IMR-90 (cell line): ENCODE measurements at regions of chr6 and their contacts with region 1.

Region 1: DNA sequence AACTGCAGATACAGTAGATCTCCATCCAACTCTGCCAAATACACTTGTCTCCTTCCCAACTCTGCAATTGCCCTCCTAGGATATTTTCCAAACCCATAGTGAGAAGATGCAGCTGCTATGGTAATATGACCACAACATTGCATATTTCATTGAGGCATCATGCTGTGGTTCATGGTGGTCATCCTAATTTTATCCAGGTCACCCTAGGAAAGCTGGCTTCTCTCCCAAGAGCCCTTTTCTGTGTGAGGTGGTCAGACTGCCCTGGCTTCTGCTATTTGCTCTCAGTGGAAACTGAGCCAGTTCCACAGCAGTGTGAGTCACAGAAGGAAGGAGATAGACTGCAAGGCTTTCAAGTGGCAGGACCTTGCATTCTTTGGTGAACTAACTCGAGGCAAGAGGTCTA is 5.5 kb downstream of the OGFRL1 start:
- DNase-seq: peak; percentile 92
- ATAC-seq: peak; percentile 89
- H3K4me3 ChIP-seq: no peak overlapping the region
- H3K27ac ChIP-seq: no peak overlapping the region
- H3K4me1 ChIP-seq: peaks cover 4% of the 10 kb centered on the region; the same call in 1 of the 2 replicates
- H3K27me3 ChIP-seq: no peaks in the 10 kb centered on the region
- CTCF ChIP-seq: no peak
- POLR2A ChIP-seq: no peak
- RAD21 ChIP-seq: no peak

Region 2: GRCh38 chr6:71277926-71278600 is 16.1 kb before region 1 on chr6:
- CTCF ChIA-PET with region 1: no interaction called
- POLR2A ChIA-PET with region 1: no interaction called
- dilution Hi-C with region 1: no loop called
- in situ Hi-C with region 1: no loop called
- intact Hi-C with region 1: no loop called
- DNase-seq: no peak
- ATAC-seq: no peak
- H3K4me3 ChIP-seq: no peak overlapping the region
- H3K27ac ChIP-seq: no peak overlapping the region
- H3K4me1 ChIP-seq: no peaks in the 10 kb centered on the region
- H3K27me3 ChIP-seq: no peaks in the 10 kb centered on the region
- CTCF ChIP-seq: no peak
- POLR2A ChIP-seq: no peak
- RAD21 ChIP-seq: no peak

Region 3: DNA sequence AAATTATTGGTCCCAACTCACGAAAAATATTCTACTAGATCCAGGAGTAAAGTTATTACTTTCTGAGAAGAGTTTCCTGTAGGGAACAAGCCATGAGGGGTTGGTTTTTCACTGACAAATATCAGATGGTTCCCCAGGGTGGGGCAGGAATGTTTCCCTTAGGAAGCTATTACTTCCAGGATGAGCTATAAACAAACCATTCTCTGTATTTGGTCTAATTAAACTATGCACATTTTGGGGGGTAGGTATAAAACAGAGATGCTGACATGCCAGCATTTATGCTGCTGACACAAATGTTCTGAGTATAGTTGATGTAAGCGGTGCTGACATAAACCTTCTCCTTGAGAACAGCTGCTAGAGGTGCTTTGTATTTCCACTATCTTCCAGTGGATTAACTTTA is 48.6 kb after region 1 on chr6:
- CTCF ChIA-PET with region 1: no interaction called
- POLR2A ChIA-PET with region 1: no interaction called
- dilution Hi-C with region 1: no loop called
- in situ Hi-C with region 1: loop called (anchors 5 kb)
- intact Hi-C with region 1: loop called (anchors 5 kb)
- DNase-seq: no peak
- ATAC-seq: peak; percentile 46
- H3K4me3 ChIP-seq: no peak overlapping the region
- H3K27ac ChIP-seq: no peak overlapping the region
- H3K4me1 ChIP-seq: peaks cover 1% of the 10 kb centered on the region; the same call in 1 of the 2 replicates
- H3K27me3 ChIP-seq: no peaks in the 10 kb centered on the region
- CTCF ChIP-seq: no peak
- POLR2A ChIP-seq: no peak
- RAD21 ChIP-seq: no peak

Region 4: DNA sequence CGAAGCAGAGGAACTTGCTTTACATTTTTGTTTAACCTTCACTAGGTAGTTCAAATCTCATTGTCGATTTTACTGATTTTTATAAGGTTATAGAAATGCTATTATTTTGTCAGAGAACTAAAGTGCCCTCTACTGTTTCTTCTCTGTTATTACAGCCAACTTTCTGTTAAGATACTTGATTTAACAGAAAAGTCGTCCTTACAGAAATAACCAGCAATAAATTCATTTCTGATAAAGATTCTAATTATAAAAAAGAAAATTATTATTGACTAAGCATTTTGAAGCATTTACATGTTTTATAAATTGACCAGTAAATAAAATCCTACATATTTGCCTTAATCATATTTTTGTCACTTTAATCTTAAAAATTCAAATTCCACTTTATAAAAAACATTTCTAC is 55.3 kb after region 1 on chr6:
- CTCF ChIA-PET with region 1: no interaction called
- POLR2A ChIA-PET with region 1: no interaction called
- dilution Hi-C with region 1: no loop called
- in situ Hi-C with region 1: loop called (anchors 5 kb)
- intact Hi-C with region 1: loop called (anchors 5 kb)
- DNase-seq: peak; percentile 62
- ATAC-seq: peak; percentile 65
- H3K4me3 ChIP-seq: no peak overlapping the region
- H3K27ac ChIP-seq: no peak overlapping the region
- H3K4me1 ChIP-seq: peaks cover 7% of the 10 kb centered on the region
- H3K27me3 ChIP-seq: no peaks in the 10 kb centered on the region
- CTCF ChIP-seq: peak; percentile 80
- POLR2A ChIP-seq: no peak
- RAD21 ChIP-seq: peak; percentile 73